Motor neuron (in vitro differentiated cells): ENCODE measurements at regions of chr16 and their contacts with region 1.

Region 1: GRCh38 chr16:20383106-20384029 is 21.2 kb downstream of the PDILT start:
- ATAC-seq: peak; percentile 92 to 97 (median 94)
- H3K4me3 ChIP-seq: no peak overlapping the region
- H3K27ac ChIP-seq: no peak overlapping the region
- H3K4me1 ChIP-seq: peaks cover 4 to 11% of the 10 kb centered on the region in 2 donors

Region 2: DNA sequence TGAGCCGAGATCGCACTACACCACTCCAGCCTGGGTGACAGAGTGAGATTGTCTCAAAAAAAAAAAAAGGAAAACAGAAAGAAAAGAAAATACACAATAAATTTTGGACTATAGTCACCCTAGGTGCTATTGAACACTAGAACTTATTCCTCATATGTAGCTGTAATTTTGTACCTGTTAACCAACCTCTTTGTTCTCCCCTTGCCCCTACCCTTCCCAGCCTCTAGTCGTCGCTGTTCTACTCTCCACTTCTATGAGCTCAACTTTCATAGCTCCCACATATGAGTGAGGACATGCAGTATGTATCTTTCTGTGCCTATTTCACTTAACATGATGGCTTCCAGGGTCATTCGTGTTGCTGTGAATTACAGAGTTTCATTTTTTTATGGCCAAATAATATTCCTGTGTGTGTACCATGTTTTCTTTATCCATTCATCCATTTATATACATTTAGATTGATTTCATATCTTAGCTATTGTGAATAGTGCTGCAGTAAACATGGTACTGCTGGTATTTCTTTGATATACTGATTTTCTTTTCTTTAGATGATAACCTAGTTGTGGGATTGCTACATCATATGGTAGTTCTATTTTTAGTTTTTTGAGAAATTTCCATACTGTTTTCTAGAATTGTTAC is 799.6 kb before region 1 on chr16:
- in situ Hi-C with region 1: loop called in 1 of 9 experiments (anchors 25 kb)
- ATAC-seq: peak in 6 of 8 experiments; percentile 38 to 98 (median 63)
- H3K4me3 ChIP-seq: no peak overlapping the region
- H3K27ac ChIP-seq: no peak overlapping the region
- H3K4me1 ChIP-seq: no peaks in the 10 kb centered on the region

Region 3: DNA sequence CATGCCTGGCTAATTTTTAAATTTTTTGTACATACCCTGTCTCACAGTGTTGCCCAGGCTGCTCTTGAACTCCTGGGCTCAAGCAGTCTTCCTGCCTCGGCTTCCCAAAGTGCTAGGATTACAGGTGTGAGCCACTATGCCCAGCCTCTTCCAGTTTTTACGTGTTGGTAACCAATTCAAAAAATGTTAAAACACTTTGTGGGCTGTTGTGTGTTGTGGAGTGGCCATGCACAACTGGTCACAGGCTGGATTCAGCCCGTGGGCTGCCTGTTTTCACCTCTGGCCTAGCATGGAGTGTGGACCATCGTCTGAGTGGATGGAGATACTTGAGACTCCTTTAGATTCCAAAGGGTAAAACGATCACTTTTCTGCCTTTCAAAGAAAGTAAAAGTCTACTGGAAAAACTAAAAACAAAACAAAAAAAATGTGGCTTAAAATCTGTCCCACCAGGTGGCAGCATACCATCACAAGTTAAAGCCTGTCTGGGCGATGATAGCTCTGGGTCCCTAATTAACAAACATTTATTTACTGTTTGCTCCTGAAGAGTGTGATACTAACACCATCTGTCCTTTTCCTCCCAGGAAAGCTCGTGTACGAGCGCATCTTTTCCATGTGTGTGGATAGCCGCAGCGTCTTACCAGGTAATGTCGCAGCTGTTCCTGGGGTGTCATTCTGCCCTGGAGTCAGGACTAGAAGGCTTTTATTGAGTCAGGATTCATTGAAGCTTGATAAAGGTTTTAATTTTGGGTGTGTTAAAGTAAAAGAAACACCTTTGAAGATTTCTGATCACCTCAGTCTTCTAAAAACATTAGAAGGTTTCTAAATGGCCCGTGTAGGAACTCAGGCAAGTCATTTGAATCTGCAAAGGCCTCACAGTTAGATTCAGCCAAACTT is 782.0 kb before region 1 on chr16:
- in situ Hi-C with region 1: loop called in 2 of 9 experiments (anchors 25 kb)
- ATAC-seq: peak in 4 of 8 experiments; percentile 32 to 67 (median 51)
- H3K4me3 ChIP-seq: no peak overlapping the region
- H3K27ac ChIP-seq: no peak overlapping the region
- H3K4me1 ChIP-seq: no peaks in the 10 kb centered on the region

Region 4: GRCh38 chr16:19898924-19899604 is 484.3 kb before region 1 on chr16:
- in situ Hi-C with region 1: loop called in 8 of 9 experiments (anchors 10 to 25 kb)
- ATAC-seq: peak; percentile 55 to 93 (median 67)
- H3K4me3 ChIP-seq: no peak overlapping the region
- H3K27ac ChIP-seq: no peak overlapping the region
- H3K4me1 ChIP-seq: peaks cover 0 to 3% of the 10 kb centered on the region in 2 donors

Region 5: DNA sequence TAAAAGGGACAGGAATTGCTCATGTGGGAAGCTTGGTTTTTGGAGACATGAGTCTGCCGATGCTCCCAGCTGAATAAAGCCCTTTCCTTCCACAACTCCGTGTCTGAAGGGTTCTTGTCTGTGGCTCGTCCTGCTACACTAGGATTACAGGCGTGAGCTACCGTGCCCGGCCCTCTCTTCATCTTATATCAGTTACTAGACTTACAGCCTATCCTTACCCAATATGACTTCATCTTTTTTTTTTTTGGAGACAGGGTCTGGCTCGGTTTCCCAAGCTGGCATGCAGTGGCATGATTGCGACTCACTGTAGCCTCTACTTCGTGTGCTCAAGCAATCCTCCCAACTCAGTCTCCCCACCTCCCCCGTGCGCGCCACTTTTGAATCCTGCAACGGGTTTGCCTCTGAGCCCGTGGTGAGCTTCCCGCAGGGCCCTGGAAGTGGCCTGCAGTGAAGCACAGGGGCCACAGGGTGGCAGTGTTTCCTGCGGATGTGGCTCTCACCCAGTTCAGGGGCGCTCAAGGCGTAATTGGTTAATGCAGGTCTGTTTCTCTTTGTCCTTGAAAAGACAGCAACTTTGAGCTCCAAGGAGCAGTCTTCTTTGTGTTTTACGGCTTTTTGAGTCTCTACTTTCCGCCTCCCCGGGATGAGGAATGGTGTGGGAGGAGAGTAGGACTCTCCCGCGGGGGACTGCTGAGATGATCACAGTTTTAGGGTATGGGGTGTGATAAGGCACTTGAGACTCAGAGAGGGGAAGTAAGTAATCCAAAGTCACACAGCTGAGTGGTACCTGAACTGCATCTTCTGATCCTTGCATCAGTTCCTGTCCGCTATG is 476.0 kb before region 1 on chr16:
- in situ Hi-C with region 1: loop called in 8 of 9 experiments (anchors 10 to 25 kb)
- ATAC-seq: peak; percentile 93 to 100 (median 96)
- H3K4me3 ChIP-seq: no peak overlapping the region
- H3K27ac ChIP-seq: no peak overlapping the region
- H3K4me1 ChIP-seq: no peaks in the 10 kb centered on the region

Region 6: DNA sequence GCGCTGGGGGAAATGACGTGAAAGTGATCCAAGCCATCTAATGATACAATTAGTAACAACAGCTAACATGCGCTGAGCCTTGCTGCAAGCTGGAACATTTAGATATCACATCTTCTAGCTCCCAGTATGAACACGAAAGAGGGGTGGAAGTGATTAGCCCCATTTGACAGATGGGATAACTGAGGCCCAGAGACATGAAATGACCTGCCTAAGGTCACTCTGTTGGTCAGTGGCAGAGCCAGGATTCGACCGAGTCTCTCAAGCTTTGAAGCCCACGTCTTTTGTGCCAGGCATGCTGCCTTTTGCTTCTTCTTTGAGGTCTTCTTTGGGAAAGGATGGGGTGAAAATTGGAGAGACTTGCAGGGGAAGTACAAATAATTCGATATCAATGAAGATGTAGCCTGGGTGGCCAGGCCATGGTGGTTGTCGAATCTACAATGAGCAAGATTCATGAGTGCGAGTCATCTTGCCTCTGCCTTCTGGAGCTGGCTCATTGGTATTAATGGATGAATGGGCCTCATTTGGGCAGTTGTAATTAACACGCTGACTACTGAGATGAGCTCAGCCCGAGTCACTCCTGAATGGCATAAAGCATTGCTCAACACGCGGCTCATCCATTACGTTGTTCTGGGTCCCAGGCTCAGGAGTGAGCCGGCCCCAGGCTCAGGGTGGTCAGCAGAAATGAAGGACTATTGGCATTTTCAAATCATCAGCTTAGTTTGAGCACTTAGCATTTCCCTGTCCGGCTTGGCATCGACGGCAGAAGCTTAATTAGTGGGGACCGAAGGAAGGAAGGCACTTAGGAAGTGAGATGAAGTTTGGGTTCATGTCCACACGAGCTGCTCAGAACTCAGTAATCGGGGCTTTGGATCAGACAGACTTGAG is 470.7 kb before region 1 on chr16:
- in situ Hi-C with region 1: loop called in 8 of 9 experiments (anchors 10 to 25 kb)
- ATAC-seq: peak in 6 of 8 experiments; percentile 41 to 99 (median 94)
- H3K4me3 ChIP-seq: no peak overlapping the region
- H3K27ac ChIP-seq: no peak overlapping the region
- H3K4me1 ChIP-seq: no peaks in the 10 kb centered on the region

Region 7: GRCh38 chr16:20704281-20704680 is 320.9 kb after region 1 on chr16:
- in situ Hi-C with region 1: loop called in 1 of 9 experiments (anchors 25 kb)
- ATAC-seq: no peak
- H3K4me3 ChIP-seq: no peak overlapping the region
- H3K27ac ChIP-seq: no peak overlapping the region
- H3K4me1 ChIP-seq: no peaks in the 10 kb centered on the region